GM12878 (cell line): ENCODE measurements at regions of chr2 and their contacts with region 1.

Region 1: GRCh38 chr2:170063456-170064235 is 114.3 kb upstream of the MYO3B start:
- DNase-seq: no peak
- ATAC-seq: no peak
- H3K4me3 ChIP-seq: no peak overlapping the region
- H3K27ac ChIP-seq: no peak overlapping the region
- H3K4me1 ChIP-seq: no peaks in the 10 kb centered on the region
- H3K27me3 ChIP-seq: no peaks in the 10 kb centered on the region
- CTCF ChIP-seq: no peak
- EP300 ChIP-seq: no peak
- POLR2A ChIP-seq: no peak
- RAD21 ChIP-seq: no peak

Region 2: DNA sequence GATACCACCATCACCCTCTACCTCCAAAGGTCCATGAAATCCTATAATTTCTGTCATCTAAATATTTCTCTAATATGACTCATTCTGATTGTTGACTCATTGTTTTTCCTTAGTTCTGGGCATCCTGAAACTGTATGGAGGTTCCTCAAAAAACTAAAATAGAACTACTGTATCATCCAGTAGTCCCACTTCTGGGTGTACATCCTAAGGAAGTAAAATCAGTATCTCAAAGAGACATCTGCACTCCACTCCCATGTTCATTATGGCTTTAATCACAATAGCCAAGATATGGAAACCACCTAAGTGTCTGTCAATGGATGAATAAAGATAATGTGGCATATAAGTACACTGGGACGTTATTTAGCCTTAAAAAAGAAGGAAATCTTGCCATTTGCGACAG is 11.5 kb before region 1 on chr2:
- CTCF ChIA-PET with region 1: no interaction called
- POLR2A ChIA-PET with region 1: interaction called, 11 read pairs
- RAD21 ChIA-PET with region 1: no interaction called
- SMC1A ChIA-PET with region 1: interaction called, 3 read pairs
- in situ Hi-C with region 1: no loop called
- intact Hi-C with region 1: no loop called
- DNase-seq: no peak
- ATAC-seq: no peak
- H3K4me3 ChIP-seq: no peak overlapping the region
- H3K27ac ChIP-seq: no peak overlapping the region
- H3K4me1 ChIP-seq: no peaks in the 10 kb centered on the region
- H3K27me3 ChIP-seq: no peaks in the 10 kb centered on the region
- CTCF ChIP-seq: no peak
- EP300 ChIP-seq: no peak
- POLR2A ChIP-seq: no peak
- RAD21 ChIP-seq: no peak

Region 3: GRCh38 chr2:170177950-170178781 is 114.5 kb after region 1 on chr2 and contains the start of gene MYO3B:
- CTCF ChIA-PET with region 1: no interaction called
- POLR2A ChIA-PET with region 1: no interaction called
- RAD21 ChIA-PET with region 1: no interaction called
- SMC1A ChIA-PET with region 1: no interaction called
- in situ Hi-C with region 1: no loop called
- intact Hi-C with region 1: no loop called
- DNase-seq: no peak
- ATAC-seq: peak; percentile 69
- H3K4me3 ChIP-seq: peak within 1 kb of the TSS; percentile 13; the same call in 1 of the 2 replicates
- H3K27ac ChIP-seq: peak within 1 kb of the TSS; percentile 80
- H3K4me1 ChIP-seq: peaks cover 38% of the 10 kb centered on the region
- H3K27me3 ChIP-seq: no peaks in the 10 kb centered on the region
- CTCF ChIP-seq: no peak
- EP300 ChIP-seq: peak; percentile 33 to 55; a peak in 2 of 4 replicates
- POLR2A ChIP-seq: no peak
- RAD21 ChIP-seq: no peak
- polyA plus RNA-seq, gene MYO3B: 1.1 to 1.2 TPM